ENCODE measurements at regions of chr17 and their contacts with region 1.

Region 1: GRCh38 chr17:58006924-58007780 is at the start of gene SRSF1:
- DNase-seq: peak; percentile 95
- ATAC-seq: peak; percentile 89
- H3K4me3 Mint-ChIP-seq: peak within 1 kb of the TSS; percentile 100
- H3K27ac Mint-ChIP-seq: peak within 1 kb of the TSS; percentile 99
- H3K4me1 Mint-ChIP-seq: peaks cover 53% of the 10 kb centered on the region
- H3K27me3 Mint-ChIP-seq: peaks cover 3% of the 10 kb centered on the region
- CTCF ChIP-seq: no peak
- total RNA-seq, gene SRSF1: 288 and 289 TPM in 2 replicates

Region 2: GRCh38 chr17:56833809-56834379 is 1173.3 kb before region 1 on chr17 and contains the starts of genes C17orf67 and DGKE:
- CTCF ChIA-PET with region 1: no interaction called
- POLR2A ChIA-PET with region 1: no interaction called
- intact Hi-C with region 1: loop called (anchors 2 kb)
- DNase-seq: peak; percentile 99
- ATAC-seq: peak; percentile 92
- H3K4me3 Mint-ChIP-seq: peak within 1 kb of the TSS; percentile 93
- H3K27ac Mint-ChIP-seq: peak within 1 kb of the TSS; percentile 88
- H3K4me1 Mint-ChIP-seq: peaks cover 42% of the 10 kb centered on the region
- H3K27me3 Mint-ChIP-seq: no peaks in the 10 kb centered on the region
- CTCF ChIP-seq: no peak
- total RNA-seq, gene C17orf67: 3.3 and 4.0 TPM in 2 replicates
- total RNA-seq, gene DGKE: 15.4 and 20.3 TPM in 2 replicates

Region 3: DNA sequence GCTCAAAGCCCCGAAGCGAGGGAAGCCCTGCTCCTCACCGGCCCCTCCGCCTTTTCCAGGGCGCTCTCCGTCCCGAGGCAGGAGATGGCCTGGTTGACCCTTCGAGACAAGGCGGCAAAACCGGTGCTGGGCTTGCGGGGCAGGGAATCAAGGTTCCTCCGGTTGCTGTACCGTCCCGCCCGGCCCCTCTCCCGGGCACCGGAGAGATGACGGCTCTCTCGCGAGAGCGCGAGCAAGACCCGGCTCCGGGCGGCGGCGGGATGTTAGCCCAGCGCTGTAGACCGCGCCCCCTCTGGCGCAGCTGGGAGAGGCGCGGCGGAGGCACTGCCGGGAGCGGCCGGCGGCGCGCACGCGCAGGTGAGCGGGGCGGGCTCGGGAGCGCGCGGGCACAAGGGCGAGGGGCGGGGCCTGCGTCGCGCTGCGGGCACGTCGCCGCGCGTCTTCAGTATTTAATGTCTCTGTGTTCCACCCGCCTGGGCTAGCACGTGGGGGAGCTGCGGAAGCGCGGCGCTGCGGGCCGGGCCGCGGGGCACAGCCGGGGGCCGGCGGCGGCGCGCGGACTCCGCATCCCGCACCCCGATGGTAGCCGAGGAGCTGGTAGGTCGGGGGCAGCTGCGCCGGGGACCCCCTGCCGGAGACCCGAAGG is 922.2 kb before region 1 on chr17 and contains the start of gene AKAP1:
- CTCF ChIA-PET with region 1: no interaction called
- POLR2A ChIA-PET with region 1: interaction called, 4 read pairs
- intact Hi-C with region 1: loop called (anchors 1 kb)
- DNase-seq: peak; percentile 94
- ATAC-seq: peak; percentile 89
- H3K4me3 Mint-ChIP-seq: peak within 1 kb of the TSS; percentile 90
- H3K27ac Mint-ChIP-seq: peak within 1 kb of the TSS; percentile 91
- H3K4me1 Mint-ChIP-seq: peaks cover 25% of the 10 kb centered on the region
- H3K27me3 Mint-ChIP-seq: no peaks in the 10 kb centered on the region
- CTCF ChIP-seq: no peak
- total RNA-seq, gene AKAP1: 22.5 and 26.2 TPM in 2 replicates

Region 4: DNA sequence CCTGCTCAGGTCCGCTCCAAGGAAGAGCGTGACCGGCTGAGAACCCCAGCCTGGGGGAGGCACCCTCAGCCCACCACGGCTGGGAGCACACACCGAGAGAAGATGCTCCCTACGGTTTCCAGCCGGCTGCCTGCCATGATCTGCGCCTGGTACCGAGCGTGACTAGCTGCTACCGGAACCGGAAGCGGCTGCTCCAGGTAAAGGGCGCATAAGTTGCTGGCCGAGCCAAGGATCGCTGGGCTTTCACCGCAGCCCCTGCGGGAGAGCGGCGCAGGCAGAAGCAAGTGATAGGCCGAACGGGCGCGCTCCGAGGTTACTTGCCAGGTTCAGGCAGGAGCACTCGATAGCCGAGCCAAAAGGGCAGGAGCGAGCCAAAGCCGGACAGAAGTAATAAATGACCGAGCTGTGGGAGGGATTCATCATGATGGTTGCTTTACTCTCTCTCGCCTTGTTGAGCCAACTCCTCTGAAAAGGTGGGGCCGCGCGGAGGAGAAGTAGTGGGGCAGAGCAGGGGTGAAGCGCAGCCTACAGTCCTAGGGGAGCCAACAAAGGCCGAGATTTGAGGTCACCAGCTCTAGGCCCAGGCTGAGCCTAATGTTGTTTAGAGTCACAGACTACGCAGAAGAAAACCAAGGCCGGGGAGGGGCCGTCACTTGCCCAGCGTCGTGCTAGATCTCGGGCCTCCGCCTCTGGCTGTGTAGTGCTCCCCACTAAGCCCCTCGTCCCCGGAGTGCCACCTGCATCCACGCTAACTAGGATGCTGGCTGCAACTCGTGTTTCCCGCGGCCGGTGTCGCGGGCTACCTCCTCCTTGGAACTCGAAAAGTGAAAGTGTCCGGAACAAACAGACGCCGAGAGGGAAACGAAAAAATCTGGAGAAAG is 157.0 kb before region 1 on chr17 and contains the start of gene MRPS23:
- CTCF ChIA-PET with region 1: interaction called, 242 read pairs
- POLR2A ChIA-PET with region 1: interaction called, 49 read pairs
- intact Hi-C with region 1: loop called (anchors 1 kb)
- DNase-seq: peak; percentile 87
- ATAC-seq: peak; percentile 95
- H3K4me3 Mint-ChIP-seq: peak within 1 kb of the TSS; percentile 93
- H3K27ac Mint-ChIP-seq: peak within 1 kb of the TSS; percentile 96
- H3K4me1 Mint-ChIP-seq: peaks cover 38% of the 10 kb centered on the region
- H3K27me3 Mint-ChIP-seq: no peaks in the 10 kb centered on the region
- CTCF ChIP-seq: no peak
- total RNA-seq, gene MRPS23: 37.9 and 47.4 TPM in 2 replicates

Region 5: GRCh38 chr17:57987580-57988421 is 19.4 kb before region 1 on chr17 and contains the start of gene VEZF1:
- CTCF ChIA-PET with region 1: interaction called, 3 read pairs
- POLR2A ChIA-PET with region 1: interaction called, 22 read pairs
- intact Hi-C with region 1: loop called (anchors 1 kb)
- DNase-seq: peak; percentile 82
- ATAC-seq: peak; percentile 73
- H3K4me3 Mint-ChIP-seq: peak within 1 kb of the TSS; percentile 94
- H3K27ac Mint-ChIP-seq: peak within 1 kb of the TSS; percentile 93
- H3K4me1 Mint-ChIP-seq: peaks cover 54% of the 10 kb centered on the region
- H3K27me3 Mint-ChIP-seq: no peaks in the 10 kb centered on the region
- CTCF ChIP-seq: no peak
- total RNA-seq, gene VEZF1: 40.5 and 45.1 TPM in 2 replicates

Region 6: GRCh38 chr17:58020401-58020800 is 13.2 kb after region 1 on chr17:
- CTCF ChIA-PET with region 1: no interaction called
- POLR2A ChIA-PET with region 1: interaction called, 11 read pairs
- intact Hi-C with region 1: no loop called
- DNase-seq: no peak
- ATAC-seq: no peak
- H3K4me3 Mint-ChIP-seq: no peak overlapping the region
- H3K27ac Mint-ChIP-seq: no peak overlapping the region
- H3K4me1 Mint-ChIP-seq: no peaks in the 10 kb centered on the region
- H3K27me3 Mint-ChIP-seq: peaks cover 16% of the 10 kb centered on the region
- CTCF ChIP-seq: no peak

Region 7: DNA sequence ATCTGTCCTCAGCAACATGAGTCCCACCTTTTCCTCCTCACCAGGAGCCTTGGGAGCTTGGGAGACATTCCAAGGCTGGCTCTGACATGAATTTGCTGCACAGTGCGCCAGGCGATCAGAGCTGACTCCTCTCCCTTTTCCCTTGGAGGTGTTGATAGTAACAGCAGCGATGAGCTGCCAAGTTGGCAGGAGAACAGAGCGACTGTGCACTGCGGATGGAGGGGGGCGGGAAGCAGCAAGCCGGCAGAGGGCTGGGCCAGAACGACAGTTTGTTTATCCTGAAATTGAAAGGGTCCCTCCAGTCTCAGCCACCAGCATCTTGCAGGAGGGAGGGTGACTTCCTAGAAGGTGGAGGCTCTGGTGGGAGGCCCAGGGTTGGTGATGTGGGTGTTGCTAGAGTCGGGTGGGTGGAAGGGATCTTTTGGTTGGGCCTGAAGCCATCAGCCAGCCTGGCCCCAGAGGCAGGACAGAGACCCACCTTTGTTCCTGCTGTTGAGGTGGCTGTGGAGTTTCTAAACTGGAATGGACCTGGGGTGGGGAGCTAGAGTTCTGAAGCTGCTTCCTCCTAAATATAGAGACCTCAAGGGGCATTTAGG is 53.5 kb after region 1 on chr17:
- CTCF ChIA-PET with region 1: no interaction called
- POLR2A ChIA-PET with region 1: no interaction called
- intact Hi-C with region 1: no loop called
- DNase-seq: no peak
- ATAC-seq: no peak
- H3K4me3 Mint-ChIP-seq: no peak overlapping the region
- H3K27ac Mint-ChIP-seq: no peak overlapping the region
- H3K4me1 Mint-ChIP-seq: no peaks in the 10 kb centered on the region
- H3K27me3 Mint-ChIP-seq: peaks cover 5% of the 10 kb centered on the region
- CTCF ChIP-seq: no peak

Region 8: GRCh38 chr17:58219001-58219788 is 212.0 kb after region 1 on chr17 and contains the start of gene MKS1:
- CTCF ChIA-PET with region 1: no interaction called
- POLR2A ChIA-PET with region 1: no interaction called
- intact Hi-C with region 1: loop called (anchors 1 kb)
- DNase-seq: peak; percentile 91
- ATAC-seq: peak; percentile 96
- H3K4me3 Mint-ChIP-seq: peak within 1 kb of the TSS; percentile 91
- H3K27ac Mint-ChIP-seq: peak within 1 kb of the TSS; percentile 96
- H3K4me1 Mint-ChIP-seq: peaks cover 43% of the 10 kb centered on the region
- H3K27me3 Mint-ChIP-seq: peaks cover 2% of the 10 kb centered on the region
- CTCF ChIP-seq: no peak
- total RNA-seq, gene MKS1: 16.0 and 17.3 TPM in 2 replicates

Measured in activated B cell treated with CpG ODN at 0.5 μM for 24 hours (primary cell).